ENCODE measurements at regions of chr2 and their contacts with region 1.

Region 1: GRCh38 chr2:69724540-69725159 is 17.3 kb upstream of the ANXA4 start:
- DNase-seq: peak; percentile 74 to 80 (median 77)
- H3K4me3 ChIP-seq: no peak overlapping the region
- H3K4me3 Mint-ChIP-seq: peak overlapping the region in 7 of 8 donors; percentile 38 to 70 (median 60)
- H3K27ac ChIP-seq: no peak overlapping the region
- H3K27ac Mint-ChIP-seq: no peak overlapping the region
- H3K4me1 ChIP-seq: peaks cover 7% of the 10 kb centered on the region
- H3K4me1 Mint-ChIP-seq: peaks cover 4 to 7% (median 6%) of the 10 kb centered on the region in 4 donors
- H3K27me3 ChIP-seq: no peaks in the 10 kb centered on the region
- H3K27me3 Mint-ChIP-seq: no peaks in the 10 kb centered on the region

Region 2: GRCh38 chr2:69122271-69122670 is 602.4 kb before region 1 on chr2:
- CTCF ChIA-PET with region 1: no interaction called
- POLR2A ChIA-PET with region 1: no interaction called
- intact Hi-C with region 1: no loop called
- DNase-seq: no peak
- H3K4me3 ChIP-seq: no peak overlapping the region
- H3K4me3 Mint-ChIP-seq: no peak overlapping the region
- H3K27ac ChIP-seq: no peak overlapping the region
- H3K27ac Mint-ChIP-seq: no peak overlapping the region
- H3K4me1 ChIP-seq: no peaks in the 10 kb centered on the region
- H3K4me1 Mint-ChIP-seq: no peaks in the 10 kb centered on the region
- H3K27me3 ChIP-seq: no peaks in the 10 kb centered on the region
- H3K27me3 Mint-ChIP-seq: peaks cover 9 to 12% of the 10 kb centered on the region in 2 donors

Region 3: GRCh38 chr2:69436938-69437750 is 287.5 kb before region 1 on chr2 and contains the start of gene NFU1:
- CTCF ChIA-PET with region 1: interaction called, 10 read pairs
- POLR2A ChIA-PET with region 1: no interaction called
- intact Hi-C with region 1: no loop called
- DNase-seq: peak; percentile 85 to 91 (median 89)
- H3K4me3 ChIP-seq: peak within 1 kb of the TSS; percentile 75 to 82
- H3K4me3 Mint-ChIP-seq: peak within 1 kb of the TSS; percentile 93 to 99 (median 98)
- H3K27ac ChIP-seq: peak within 1 kb of the TSS; percentile 91
- H3K27ac Mint-ChIP-seq: peak within 1 kb of the TSS; percentile 98 to 100 (median 99)
- H3K4me1 ChIP-seq: peaks cover 32% of the 10 kb centered on the region
- H3K4me1 Mint-ChIP-seq: peaks cover 26 to 48% (median 34%) of the 10 kb centered on the region in 4 donors
- H3K27me3 ChIP-seq: no peaks in the 10 kb centered on the region
- H3K27me3 Mint-ChIP-seq: no peaks in the 10 kb centered on the region
- total RNA-seq, gene NFU1: 23.9 to 27.0 TPM

Region 4: GRCh38 chr2:69625078-69625795 is 99.4 kb before region 1 on chr2:
- CTCF ChIA-PET with region 1: interaction called, 12 read pairs
- POLR2A ChIA-PET with region 1: no interaction called
- intact Hi-C with region 1: no loop called
- DNase-seq: peak in 1 of 5 donors; percentile 14
- H3K4me3 ChIP-seq: no peak overlapping the region
- H3K4me3 Mint-ChIP-seq: no peak overlapping the region
- H3K27ac ChIP-seq: no peak overlapping the region
- H3K27ac Mint-ChIP-seq: no peak overlapping the region
- H3K4me1 ChIP-seq: peaks cover 90% of the 10 kb centered on the region
- H3K4me1 Mint-ChIP-seq: peaks cover 0 to 20% (median 14%) of the 10 kb centered on the region in 4 donors
- H3K27me3 ChIP-seq: no peaks in the 10 kb centered on the region
- H3K27me3 Mint-ChIP-seq: no peaks in the 10 kb centered on the region

Region 5: GRCh38 chr2:69741619-69742466 is 17.2 kb after region 1 on chr2 and contains the start of gene ANXA4:
- CTCF ChIA-PET with region 1: interaction called, 22 read pairs
- POLR2A ChIA-PET with region 1: interaction called, 3 read pairs
- intact Hi-C with region 1: no loop called
- DNase-seq: peak; percentile 38 to 78 (median 52)
- H3K4me3 ChIP-seq: peak within 1 kb of the TSS; percentile 73 to 83
- H3K4me3 Mint-ChIP-seq: peak within 1 kb of the TSS; percentile 88 to 99 (median 96)
- H3K27ac ChIP-seq: peak within 1 kb of the TSS; percentile 58
- H3K27ac Mint-ChIP-seq: peak within 1 kb of the TSS; percentile 62 to 95 (median 93)
- H3K4me1 ChIP-seq: peaks cover 14% of the 10 kb centered on the region
- H3K4me1 Mint-ChIP-seq: peaks cover 13 to 25% (median 17%) of the 10 kb centered on the region in 4 donors
- H3K27me3 ChIP-seq: no peaks in the 10 kb centered on the region
- H3K27me3 Mint-ChIP-seq: no peaks in the 10 kb centered on the region
- total RNA-seq, gene ANXA4: 22.3 to 24.2 TPM

Region 6: DNA sequence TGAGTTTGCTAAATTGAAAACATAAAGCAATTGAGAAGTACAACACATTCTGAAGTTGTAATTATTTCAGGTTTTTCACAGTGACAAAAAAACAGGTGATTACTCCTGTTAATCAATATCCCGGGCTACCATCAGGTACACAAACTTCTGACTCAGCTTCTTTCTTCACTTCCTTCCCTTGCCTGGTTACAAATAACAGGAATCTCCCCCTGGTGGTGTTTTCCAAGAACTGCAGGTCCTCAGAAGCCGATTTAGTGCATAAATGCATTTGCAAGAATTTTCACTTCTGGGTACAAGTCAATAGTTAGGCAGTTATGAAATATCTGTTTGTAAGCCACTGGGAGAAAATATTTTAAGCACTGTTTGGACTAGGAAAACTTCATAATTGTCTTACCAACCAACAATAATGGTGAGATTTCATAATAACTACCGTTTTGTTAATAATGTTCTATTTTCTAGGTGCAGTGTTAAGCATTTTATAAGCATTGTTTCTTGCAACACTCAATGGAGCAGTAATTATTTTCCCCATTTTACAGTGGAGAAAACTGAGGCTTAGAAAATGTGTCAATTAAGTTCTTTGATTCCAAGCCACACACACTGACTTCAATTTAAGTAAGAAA is 92.4 kb after region 1 on chr2:
- CTCF ChIA-PET with region 1: interaction called, 425 read pairs
- POLR2A ChIA-PET with region 1: interaction called, 16 read pairs
- intact Hi-C with region 1: loop called (anchors 1 kb)
- DNase-seq: peak; percentile 76 to 86 (median 80)
- H3K4me3 ChIP-seq: no peak overlapping the region
- H3K4me3 Mint-ChIP-seq: no peak overlapping the region
- H3K27ac ChIP-seq: no peak overlapping the region
- H3K27ac Mint-ChIP-seq: no peak overlapping the region
- H3K4me1 ChIP-seq: peaks cover 7% of the 10 kb centered on the region
- H3K4me1 Mint-ChIP-seq: peaks cover 3 to 5% (median 4%) of the 10 kb centered on the region in 4 donors
- H3K27me3 ChIP-seq: no peaks in the 10 kb centered on the region
- H3K27me3 Mint-ChIP-seq: no peaks in the 10 kb centered on the region

Region 7: DNA sequence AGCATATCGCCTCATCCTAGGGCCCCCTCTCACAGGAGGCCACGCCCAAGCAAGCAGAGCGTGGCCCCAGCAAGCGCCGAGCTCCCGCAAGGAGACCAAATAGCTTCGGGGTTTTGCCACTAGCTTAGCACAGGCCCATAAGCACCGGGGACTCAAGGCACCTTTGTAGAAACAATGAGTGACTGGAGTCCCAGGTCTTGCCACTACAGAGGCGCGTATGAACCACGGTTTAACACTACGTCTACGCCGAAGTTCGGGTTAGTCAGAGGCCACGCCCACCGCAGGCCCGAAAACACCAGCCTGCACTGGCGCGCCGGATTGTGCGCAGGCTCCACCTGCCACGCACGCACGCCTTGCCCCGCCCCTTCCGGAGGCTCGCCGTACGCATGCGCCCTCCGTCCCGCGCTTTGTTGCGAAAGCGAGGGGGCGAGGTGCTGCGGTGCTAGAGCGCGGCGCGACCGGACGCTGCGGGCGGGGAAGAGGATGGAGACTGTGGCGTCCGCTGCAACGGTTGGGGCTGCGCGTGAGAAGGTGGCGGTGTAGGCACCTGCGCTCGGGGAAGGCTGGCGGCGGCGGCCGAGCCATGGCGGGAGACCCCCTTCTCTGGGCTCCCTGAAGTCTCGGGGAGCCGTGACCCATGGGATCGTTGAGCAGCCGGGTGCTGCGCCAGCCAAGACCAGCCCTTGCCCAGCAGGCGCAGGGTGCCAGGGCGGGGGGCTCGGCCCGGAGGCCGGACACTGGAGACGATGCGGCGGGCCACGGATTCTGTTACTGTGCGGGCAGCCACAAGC is 104.8 kb after region 1 on chr2 and contains the start of gene GMCL1:
- CTCF ChIA-PET with region 1: interaction called, 41 read pairs
- POLR2A ChIA-PET with region 1: interaction called, 5 read pairs
- intact Hi-C with region 1: no loop called
- DNase-seq: peak; percentile 98 to 99 (median 99)
- H3K4me3 ChIP-seq: peak within 1 kb of the TSS; percentile 54 to 71
- H3K4me3 Mint-ChIP-seq: peak within 1 kb of the TSS; percentile 87 to 98 (median 96)
- H3K27ac ChIP-seq: peak within 1 kb of the TSS; percentile 92
- H3K27ac Mint-ChIP-seq: peak within 1 kb of the TSS; percentile 93 to 98 (median 96)
- H3K4me1 ChIP-seq: peaks cover 42% of the 10 kb centered on the region
- H3K4me1 Mint-ChIP-seq: peaks cover 21 to 69% (median 43%) of the 10 kb centered on the region in 4 donors
- H3K27me3 ChIP-seq: no peaks in the 10 kb centered on the region
- H3K27me3 Mint-ChIP-seq: no peaks in the 10 kb centered on the region
- total RNA-seq, gene GMCL1: 28.2 to 31.8 TPM

Region 8: DNA sequence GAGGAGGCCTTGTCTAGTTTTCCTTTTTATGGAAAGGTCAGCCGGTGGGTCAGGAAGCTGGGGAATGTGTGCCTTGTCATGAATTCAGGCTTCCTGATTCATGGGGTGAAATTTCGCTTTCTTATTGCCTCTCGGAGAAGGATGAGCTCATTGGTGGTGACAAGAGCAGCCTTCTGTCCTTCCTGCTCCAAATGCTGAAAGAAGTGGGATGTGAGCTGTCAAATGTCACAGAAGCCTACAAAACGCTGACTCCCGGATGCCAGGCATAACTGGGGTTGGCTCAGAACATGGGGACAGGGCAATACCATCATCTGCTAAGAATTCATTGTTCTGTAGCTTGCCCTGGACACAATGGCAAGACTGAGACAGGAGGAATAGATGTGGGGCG is 633.0 kb after region 1 on chr2:
- CTCF ChIA-PET with region 1: no interaction called
- POLR2A ChIA-PET with region 1: no interaction called
- intact Hi-C with region 1: no loop called
- DNase-seq: no peak
- H3K4me3 ChIP-seq: no peak overlapping the region
- H3K4me3 Mint-ChIP-seq: no peak overlapping the region
- H3K27ac ChIP-seq: no peak overlapping the region
- H3K27ac Mint-ChIP-seq: no peak overlapping the region
- H3K4me1 ChIP-seq: no peaks in the 10 kb centered on the region
- H3K4me1 Mint-ChIP-seq: no peaks in the 10 kb centered on the region
- H3K27me3 ChIP-seq: no peaks in the 10 kb centered on the region
- H3K27me3 Mint-ChIP-seq: peaks cover 2 to 9% of the 10 kb centered on the region in 2 donors

Region 9: GRCh38 chr2:70616168-70616694 is 891.6 kb after region 1 on chr2:
- CTCF ChIA-PET with region 1: interaction called, 4 read pairs
- POLR2A ChIA-PET with region 1: no interaction called
- intact Hi-C with region 1: loop called (anchors 10 kb)
- DNase-seq: no peak
- H3K4me3 ChIP-seq: no peak overlapping the region
- H3K4me3 Mint-ChIP-seq: no peak overlapping the region
- H3K27ac ChIP-seq: no peak overlapping the region
- H3K27ac Mint-ChIP-seq: no peak overlapping the region
- H3K4me1 ChIP-seq: no peaks in the 10 kb centered on the region
- H3K4me1 Mint-ChIP-seq: no peaks in the 10 kb centered on the region
- H3K27me3 ChIP-seq: no peaks in the 10 kb centered on the region
- H3K27me3 Mint-ChIP-seq: peaks cover 4 to 19% of the 10 kb centered on the region in 2 donors

Measured in CD4-positive, alpha-beta memory T cell (primary cell).